Posterior vena cava (tissue), 2 donors: ENCODE measurements at regions of chr1 and their contacts with region 1.

Region 1: GRCh38 chr1:197429372-197429771 is 161.3 kb downstream of the CRB1 start:
- DNase-seq: no peak

Region 2: DNA sequence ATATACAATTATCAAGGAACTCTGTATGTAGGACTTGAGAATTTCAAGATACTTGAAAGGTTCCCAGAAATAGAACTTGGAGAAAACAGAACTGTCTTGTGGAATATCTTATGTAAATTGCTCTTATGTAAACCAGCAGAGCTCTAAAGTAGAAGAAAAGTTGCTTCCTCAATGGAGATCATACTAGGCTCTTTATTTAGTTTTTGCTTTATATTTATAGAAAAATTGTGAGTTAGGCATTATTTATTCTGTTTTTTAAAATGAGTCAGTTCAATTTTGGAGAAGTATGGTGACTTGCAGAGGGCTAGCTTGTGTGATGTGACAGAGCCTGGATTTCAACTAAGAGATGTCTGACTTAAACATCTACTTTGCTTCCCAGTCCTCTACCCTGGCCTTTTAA is 1070.7 kb after region 1 on chr1:
- intact Hi-C with region 1: loop called in 1 of 2 experiments (anchors 5 kb)
- DNase-seq: no peak